Heart left ventricle (tissue), 16 donors: ENCODE measurements at regions of chr11 and their contacts with region 1.

Region 1: GRCh38 chr11:122690801-122691548 is 35.5 kb downstream of the UBASH3B start:
- DNase-seq: peak in 1 of 5 donors; percentile 23
- ATAC-seq: peak in 3 of 4 donors; percentile 70 to 78 (median 76)
- H3K4me3 ChIP-seq: peak overlapping the region in 10 of 12 donors; percentile 4 to 53 (median 32)
- H3K27ac ChIP-seq: peak overlapping the region; percentile 34 to 81 (median 64)
- H3K4me1 ChIP-seq: peaks cover 0 to 28% (median 12%) of the 10 kb centered on the region in 12 donors
- H3K27me3 ChIP-seq: no peaks in the 10 kb centered on the region
- CTCF ChIP-seq: no peak
- POLR2A ChIP-seq: no peak

Region 2: DNA sequence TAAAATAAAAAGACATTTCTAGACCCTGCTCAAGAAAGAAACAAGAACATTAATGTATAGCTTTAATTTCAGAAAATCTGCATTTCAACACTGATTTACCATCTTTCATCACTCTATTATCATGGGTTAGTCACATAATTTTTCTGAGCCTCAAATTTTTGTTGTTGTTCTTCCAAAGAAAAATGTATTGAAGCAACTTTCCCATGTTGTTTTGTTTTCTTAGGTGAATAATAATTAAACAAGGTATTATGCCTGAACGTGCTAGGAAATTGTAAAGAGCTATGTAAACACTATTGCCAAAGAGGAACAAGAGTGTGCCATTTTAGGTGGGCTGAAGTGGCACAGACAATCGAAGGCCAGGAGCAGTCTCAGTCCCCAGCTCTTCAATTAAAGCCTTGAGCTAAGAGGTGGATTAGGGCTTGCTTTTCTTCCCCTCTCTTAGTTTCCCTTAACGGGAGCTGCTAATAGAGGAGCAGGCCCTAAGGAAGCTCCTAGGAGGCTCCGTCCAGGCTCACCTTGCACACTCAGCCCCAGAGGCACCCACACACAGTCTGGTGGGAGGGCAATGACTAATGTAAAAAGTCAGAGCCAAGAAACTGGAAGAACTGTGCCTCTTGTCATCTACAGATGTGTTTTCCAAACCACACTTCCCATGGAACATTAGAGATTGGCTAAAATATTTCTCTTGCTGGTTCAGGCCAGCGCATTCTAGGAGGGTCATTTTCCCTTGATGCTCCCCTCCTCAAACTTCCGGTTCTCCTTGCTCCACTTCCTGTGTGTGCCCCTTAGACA is 44.2 kb before region 1 on chr11:
- intact Hi-C with region 1: no loop called
- DNase-seq: no peak
- ATAC-seq: no peak
- H3K4me3 ChIP-seq: no peak overlapping the region
- H3K27ac ChIP-seq: peak overlapping the region in 1 of 12 donors; percentile 27
- H3K4me1 ChIP-seq: peaks cover 0 to 24% (median 0%) of the 10 kb centered on the region in 12 donors
- H3K27me3 ChIP-seq: no peaks in the 10 kb centered on the region
- CTCF ChIP-seq: no peak
- POLR2A ChIP-seq: no peak

Region 3: GRCh38 chr11:122721964-122722266 is 30.9 kb after region 1 on chr11:
- intact Hi-C with region 1: loop called in 1 of 10 experiments (anchors 5 kb)
- DNase-seq: no peak
- ATAC-seq: peak in 1 of 4 donors; percentile 36
- H3K4me3 ChIP-seq: no peak overlapping the region
- H3K27ac ChIP-seq: no peak overlapping the region
- H3K4me1 ChIP-seq: peaks cover 0 to 52% (median 2%) of the 10 kb centered on the region in 12 donors
- H3K27me3 ChIP-seq: no peaks in the 10 kb centered on the region
- CTCF ChIP-seq: no peak
- POLR2A ChIP-seq: no peak